Activated B cell treated with CpG ODN at 0.5 μM for 24 hours (primary cell): ENCODE measurements at regions of chr17 and their contacts with region 1.

Region 1: DNA sequence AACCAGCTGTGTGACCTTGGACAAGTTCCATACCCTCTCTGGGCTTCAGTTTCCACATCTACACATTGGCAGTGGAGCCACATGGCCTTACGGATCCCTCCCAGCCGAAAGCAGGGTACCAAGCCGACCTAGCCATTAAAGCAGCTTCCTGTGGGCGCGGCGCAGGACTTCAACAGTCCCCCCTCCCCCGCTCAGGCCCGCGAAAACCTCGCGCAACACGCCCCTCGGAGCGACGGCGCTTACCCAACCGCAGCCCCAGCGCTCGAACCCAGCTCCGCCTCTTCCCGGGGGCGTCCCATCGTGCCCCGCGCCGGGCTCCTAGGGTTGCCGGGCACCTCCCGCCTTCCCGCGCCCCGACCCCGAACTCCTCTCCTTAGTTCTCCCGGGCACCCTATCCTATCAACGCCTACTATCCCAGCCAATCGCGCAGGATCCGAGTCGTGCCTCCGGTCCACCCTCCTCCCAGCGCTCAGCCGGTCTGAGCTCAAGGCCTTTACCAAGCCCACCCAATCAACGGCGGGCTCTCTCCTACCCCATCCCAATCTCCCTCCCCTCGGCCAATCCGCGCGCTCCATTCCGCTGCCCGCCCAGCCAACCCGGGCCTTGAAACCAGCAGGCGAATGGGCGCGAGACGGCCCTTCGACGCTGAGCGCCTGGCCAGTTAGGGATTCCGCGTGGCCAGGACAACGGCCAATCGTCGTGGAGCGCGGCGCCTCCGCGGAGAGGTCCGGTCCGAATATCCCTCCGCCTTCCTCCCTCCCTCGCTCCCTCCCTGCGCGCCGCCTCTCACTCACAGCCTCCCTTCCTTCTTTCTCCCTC is at the start of gene KPNB1:
- DNase-seq: peak; percentile 92
- ATAC-seq: peak; percentile 80
- H3K4me3 Mint-ChIP-seq: peak within 1 kb of the TSS; percentile 99
- H3K27ac Mint-ChIP-seq: peak within 1 kb of the TSS; percentile 99
- H3K4me1 Mint-ChIP-seq: peaks cover 53% of the 10 kb centered on the region
- H3K27me3 Mint-ChIP-seq: no peaks in the 10 kb centered on the region
- CTCF ChIP-seq: no peak
- total RNA-seq, gene KPNB1: 361 and 365 TPM in 2 replicates

Region 2: DNA sequence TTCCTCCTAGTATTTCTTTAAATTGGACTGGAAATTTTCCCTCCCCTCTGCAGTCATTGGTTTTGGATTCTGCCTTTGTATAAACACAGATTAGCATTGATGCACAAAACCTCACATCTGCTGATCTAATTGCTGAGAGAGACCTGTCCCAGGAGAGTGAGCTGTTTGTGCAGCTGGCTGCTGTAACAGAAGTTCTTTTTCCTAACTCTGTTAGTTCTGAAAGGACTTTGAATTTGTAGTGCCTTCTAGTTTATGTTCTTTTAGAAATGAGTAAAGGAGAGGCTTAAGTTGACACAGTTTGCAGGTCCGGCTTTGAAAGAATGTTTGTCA is 44.8 kb before region 1 on chr17:
- CTCF ChIA-PET with region 1: no interaction called
- POLR2A ChIA-PET with region 1: no interaction called
- intact Hi-C with region 1: no loop called
- DNase-seq: no peak
- ATAC-seq: no peak
- H3K4me3 Mint-ChIP-seq: no peak overlapping the region
- H3K27ac Mint-ChIP-seq: no peak overlapping the region
- H3K4me1 Mint-ChIP-seq: no peaks in the 10 kb centered on the region
- H3K27me3 Mint-ChIP-seq: no peaks in the 10 kb centered on the region
- CTCF ChIP-seq: no peak

Region 3: DNA sequence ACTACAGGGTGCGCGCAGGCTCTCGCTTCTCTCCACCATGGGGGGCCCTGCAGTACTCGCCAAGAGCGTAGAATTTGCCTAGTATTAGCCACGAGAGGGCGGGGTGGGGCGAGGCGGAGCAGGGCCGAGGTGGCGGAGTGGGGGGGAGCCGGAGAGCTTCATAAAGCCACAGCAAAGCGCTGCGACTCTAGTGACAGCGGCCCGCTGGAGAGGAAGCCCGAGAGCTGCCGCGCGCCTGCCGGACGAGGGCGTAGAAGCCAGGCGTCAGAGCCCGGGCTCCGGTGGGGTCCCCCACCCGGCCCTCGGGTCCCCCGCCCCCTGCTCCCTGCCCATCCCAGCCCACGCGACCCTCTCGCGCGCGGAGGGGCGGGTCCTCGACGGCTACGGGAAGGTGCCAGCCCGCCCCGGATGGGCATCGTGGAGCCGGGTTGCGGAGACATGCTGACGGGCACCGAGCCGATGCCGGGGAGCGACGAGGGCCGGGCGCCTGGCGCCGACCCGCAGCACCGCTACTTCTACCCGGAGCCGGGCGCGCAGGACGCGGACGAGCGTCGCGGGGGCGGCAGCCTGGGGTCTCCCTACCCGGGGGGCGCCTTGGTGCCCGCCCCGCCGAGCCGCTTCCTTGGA is 83.8 kb after region 1 on chr17 and contains the start of gene TBX21:
- CTCF ChIA-PET with region 1: no interaction called
- POLR2A ChIA-PET with region 1: interaction called, 15 read pairs
- intact Hi-C with region 1: no loop called
- DNase-seq: peak; percentile 79
- ATAC-seq: peak; percentile 91
- H3K4me3 Mint-ChIP-seq: peak within 1 kb of the TSS; percentile 94
- H3K27ac Mint-ChIP-seq: peak within 1 kb of the TSS; percentile 87
- H3K4me1 Mint-ChIP-seq: peaks cover 52% of the 10 kb centered on the region
- H3K27me3 Mint-ChIP-seq: peaks cover 2% of the 10 kb centered on the region
- CTCF ChIP-seq: peak; percentile 43
- total RNA-seq, gene TBX21: 3.6 and 3.8 TPM in 2 replicates

Region 4: GRCh38 chr17:47763913-47764582 is 114.7 kb after region 1 on chr17:
- CTCF ChIA-PET with region 1: no interaction called
- POLR2A ChIA-PET with region 1: no interaction called
- intact Hi-C with region 1: no loop called
- DNase-seq: no peak
- ATAC-seq: no peak
- H3K4me3 Mint-ChIP-seq: no peak overlapping the region
- H3K27ac Mint-ChIP-seq: no peak overlapping the region
- H3K4me1 Mint-ChIP-seq: no peaks in the 10 kb centered on the region
- H3K27me3 Mint-ChIP-seq: peaks cover 25% of the 10 kb centered on the region
- CTCF ChIP-seq: no peak

Region 5: GRCh38 chr17:48107168-48108132 is 458.1 kb after region 1 on chr17 and contains the start of gene SNX11:
- CTCF ChIA-PET with region 1: no interaction called
- POLR2A ChIA-PET with region 1: interaction called, 6 read pairs
- intact Hi-C with region 1: loop called (anchors 10 kb)
- DNase-seq: peak; percentile 89
- ATAC-seq: peak; percentile 71
- H3K4me3 Mint-ChIP-seq: peak within 1 kb of the TSS; percentile 99
- H3K27ac Mint-ChIP-seq: peak within 1 kb of the TSS; percentile 97
- H3K4me1 Mint-ChIP-seq: peaks cover 69% of the 10 kb centered on the region
- H3K27me3 Mint-ChIP-seq: no peaks in the 10 kb centered on the region
- CTCF ChIP-seq: no peak
- total RNA-seq, gene SNX11: 129 and 145 TPM in 2 replicates